ENCODE measurements at regions of chr4 and their contacts with region 1.

Region 1: GRCh38 chr4:166512267-166512666 is 639.2 kb downstream of the TLL1 start:
- DNase-seq: no peak
- ATAC-seq: no peak
- H3K4me3 Mint-ChIP-seq: no peak overlapping the region
- H3K27ac Mint-ChIP-seq: no peak overlapping the region
- H3K4me1 Mint-ChIP-seq: peaks cover 2% of the 10 kb centered on the region; the same call in 1 of the 2 replicates
- H3K27me3 Mint-ChIP-seq: no peaks in the 10 kb centered on the region
- CTCF ChIP-seq: no peak

Region 2: GRCh38 chr4:166435449-166435848 is 76.8 kb before region 1 on chr4:
- CTCF ChIA-PET with region 1: no interaction called
- POLR2A ChIA-PET with region 1: no interaction called
- DNase-seq: no peak
- ATAC-seq: no peak
- H3K4me3 Mint-ChIP-seq: no peak overlapping the region
- H3K27ac Mint-ChIP-seq: no peak overlapping the region
- H3K4me1 Mint-ChIP-seq: no peaks in the 10 kb centered on the region
- H3K27me3 Mint-ChIP-seq: no peaks in the 10 kb centered on the region
- CTCF ChIP-seq: no peak

Region 3: GRCh38 chr4:166501941-166502382 is 10.3 kb before region 1 on chr4:
- CTCF ChIA-PET with region 1: interaction called, 15 read pairs
- POLR2A ChIA-PET with region 1: no interaction called
- DNase-seq: peak; percentile 74
- ATAC-seq: peak; percentile 97
- H3K4me3 Mint-ChIP-seq: no peak overlapping the region
- H3K27ac Mint-ChIP-seq: no peak overlapping the region
- H3K4me1 Mint-ChIP-seq: peaks cover 32% of the 10 kb centered on the region
- H3K27me3 Mint-ChIP-seq: peaks cover 3% of the 10 kb centered on the region; the same call in 1 of the 2 replicates
- CTCF ChIP-seq: peak; percentile 63